Upper lobe of right lung (tissue), 1 donor: ENCODE measurements at regions of chr6 and their contacts with region 1.

Region 1: GRCh38 chr6:157873735-157874344 is 50.8 kb downstream of the SNX9 start:
- DNase-seq: peak; percentile 85
- ATAC-seq: peak; percentile 87
- H3K4me3 ChIP-seq: no peak overlapping the region
- H3K27ac ChIP-seq: no peak overlapping the region
- H3K4me1 ChIP-seq: no peaks in the 10 kb centered on the region
- H3K27me3 ChIP-seq: peaks cover 4% of the 10 kb centered on the region
- CTCF ChIP-seq: peak; percentile 79

Region 2: DNA sequence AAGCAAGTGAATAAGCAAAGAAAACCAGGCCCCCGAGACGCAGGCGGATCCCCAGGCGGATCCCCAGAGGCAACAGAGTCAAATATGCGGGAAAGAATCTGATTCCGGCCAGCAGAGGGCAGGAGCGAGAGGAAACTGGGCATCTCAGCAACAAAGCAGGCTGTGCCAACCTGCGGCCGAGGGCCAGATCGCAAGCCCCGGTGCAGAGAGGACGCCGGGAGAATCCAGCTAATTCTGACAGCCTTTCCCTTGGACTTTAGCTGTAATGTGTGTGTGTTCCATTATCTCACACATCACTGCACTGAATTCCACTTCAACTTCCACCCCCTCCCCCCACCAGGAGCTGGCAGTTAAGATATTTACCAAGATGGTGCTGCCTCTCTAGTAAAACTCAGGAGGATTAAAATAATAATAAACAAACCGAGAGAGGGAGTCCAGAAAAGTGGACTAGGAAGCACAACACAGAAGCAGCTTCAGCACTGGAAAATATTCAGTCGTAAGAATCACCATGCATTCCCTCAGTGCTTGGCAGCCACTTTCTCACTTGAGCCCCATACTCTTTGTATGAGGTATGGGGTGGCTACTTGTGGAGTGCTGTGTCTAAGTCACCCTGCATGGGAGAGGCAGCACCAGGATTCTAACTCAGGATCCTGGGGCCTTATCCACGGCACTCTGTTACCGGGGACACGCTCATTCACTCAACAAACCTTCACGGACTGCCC is 117.0 kb before region 1 on chr6:
- intact Hi-C with region 1: loop called (anchors 10 kb)
- DNase-seq: peak; percentile 87
- ATAC-seq: peak; percentile 95
- H3K4me3 ChIP-seq: no peak overlapping the region
- H3K27ac ChIP-seq: no peak overlapping the region
- H3K4me1 ChIP-seq: peaks cover 20% of the 10 kb centered on the region
- H3K27me3 ChIP-seq: peaks cover 4% of the 10 kb centered on the region
- CTCF ChIP-seq: peak; percentile 85